ENCODE measurements at regions of chr2 and their contacts with region 1.

Region 1: GRCh38 chr2:137964066-137964858 is at the start of gene HNMT:
- DNase-seq: peak; percentile 80 to 84
- H3K4me3 ChIP-seq: peak within 1 kb of the TSS; percentile 50
- H3K4me3 Mint-ChIP-seq: peak within 1 kb of the TSS; percentile 93
- H3K27ac Mint-ChIP-seq: peak within 1 kb of the TSS; percentile 98
- H3K4me1 ChIP-seq: peaks cover 40% of the 10 kb centered on the region
- H3K4me1 Mint-ChIP-seq: peaks cover 24% of the 10 kb centered on the region
- H3K27me3 ChIP-seq: no peaks in the 10 kb centered on the region
- H3K27me3 Mint-ChIP-seq: no peaks in the 10 kb centered on the region
- CTCF ChIP-seq: no peak
- total RNA-seq, gene HNMT: 42.8 and 44.6 TPM in 2 replicates

Region 2: DNA sequence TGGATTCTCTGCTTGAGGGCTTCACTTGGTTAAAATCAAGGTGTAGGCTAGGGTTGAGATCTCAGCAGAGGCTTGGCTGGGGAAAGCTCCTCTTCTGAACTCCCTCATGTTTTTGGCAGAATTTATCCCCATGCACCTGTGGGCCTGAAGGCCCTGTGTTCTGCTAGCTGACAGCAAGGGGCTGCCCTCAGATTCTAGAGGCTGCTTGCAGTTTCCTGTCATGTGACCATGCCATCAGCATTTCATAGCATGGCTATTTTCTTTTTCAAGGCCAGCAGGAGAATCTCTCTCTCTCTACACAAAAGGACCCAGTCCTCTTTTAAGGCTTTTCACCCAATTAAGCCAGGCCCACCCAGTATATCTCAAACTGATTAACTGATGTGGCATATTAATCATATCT is 514.8 kb before region 1 on chr2:
- CTCF ChIA-PET with region 1: no interaction called
- POLR2A ChIA-PET with region 1: no interaction called
- intact Hi-C with region 1: no loop called
- DNase-seq: no peak
- H3K4me3 ChIP-seq: no peak overlapping the region
- H3K4me3 Mint-ChIP-seq: no peak overlapping the region
- H3K27ac Mint-ChIP-seq: no peak overlapping the region
- H3K4me1 ChIP-seq: no peaks in the 10 kb centered on the region
- H3K4me1 Mint-ChIP-seq: no peaks in the 10 kb centered on the region
- H3K27me3 ChIP-seq: no peaks in the 10 kb centered on the region
- H3K27me3 Mint-ChIP-seq: no peaks in the 10 kb centered on the region
- CTCF ChIP-seq: no peak

Region 3: GRCh38 chr2:137865954-137866540 is 98.2 kb before region 1 on chr2:
- CTCF ChIA-PET with region 1: interaction called, 5 read pairs
- POLR2A ChIA-PET with region 1: interaction called, 6 read pairs
- intact Hi-C with region 1: loop called (anchors 1 kb)
- DNase-seq: peak; percentile 73 to 79
- H3K4me3 ChIP-seq: no peak overlapping the region
- H3K4me3 Mint-ChIP-seq: no peak overlapping the region
- H3K27ac Mint-ChIP-seq: no peak overlapping the region
- H3K4me1 ChIP-seq: peaks cover 14% of the 10 kb centered on the region
- H3K4me1 Mint-ChIP-seq: no peaks in the 10 kb centered on the region
- H3K27me3 ChIP-seq: no peaks in the 10 kb centered on the region
- H3K27me3 Mint-ChIP-seq: no peaks in the 10 kb centered on the region
- CTCF ChIP-seq: peak; percentile 86 to 89

Region 4: DNA sequence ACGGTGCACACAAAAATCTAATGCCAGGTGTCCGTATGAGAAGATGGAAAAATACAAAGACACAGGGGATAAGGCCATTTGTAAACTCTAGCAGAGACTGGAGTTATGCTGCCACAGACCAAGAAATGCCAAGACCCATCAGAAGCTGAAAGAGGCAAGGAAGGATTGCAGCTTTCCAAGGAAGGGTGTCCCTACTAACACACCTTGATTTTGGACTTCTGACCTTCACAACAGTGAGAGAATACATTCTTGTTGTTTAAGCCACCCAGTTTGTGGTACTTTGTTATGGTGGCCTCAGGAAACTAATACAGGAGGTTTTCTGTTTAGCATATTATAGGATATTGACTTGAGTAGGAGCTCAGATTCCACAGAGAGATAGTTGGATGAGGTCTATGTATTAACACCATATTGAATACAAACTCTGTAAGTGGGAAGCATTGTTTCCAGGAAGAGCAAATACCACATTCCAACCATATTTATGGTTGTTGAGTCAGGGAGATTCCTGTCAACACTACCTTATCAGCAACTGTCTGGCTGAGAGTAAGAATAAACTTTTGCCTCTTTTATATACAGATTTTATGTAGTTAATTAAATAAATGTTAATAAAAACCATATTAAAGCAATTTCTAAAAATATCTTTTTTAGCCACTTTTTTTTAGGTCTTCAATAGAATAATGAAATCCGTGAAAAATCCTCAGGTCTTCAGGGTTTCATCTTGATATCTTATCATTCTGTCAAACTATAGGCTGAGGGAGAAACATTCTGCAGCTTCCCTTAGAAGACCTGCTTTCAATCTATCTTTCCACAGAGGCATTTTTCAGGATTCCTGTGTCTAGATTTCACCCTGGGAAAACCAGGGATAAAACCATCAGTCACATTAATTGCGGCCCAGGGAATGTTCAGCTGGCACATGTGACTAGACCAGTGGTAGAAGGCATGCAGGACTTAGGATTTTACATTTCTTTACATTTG is 35.4 kb before region 1 on chr2:
- CTCF ChIA-PET with region 1: no interaction called
- POLR2A ChIA-PET with region 1: interaction called, 11 read pairs
- intact Hi-C with region 1: loop called (anchors 1 kb)
- DNase-seq: peak; percentile 49 to 71
- H3K4me3 ChIP-seq: no peak overlapping the region
- H3K4me3 Mint-ChIP-seq: peak overlapping the region; percentile 37
- H3K27ac Mint-ChIP-seq: peak overlapping the region; percentile 91
- H3K4me1 ChIP-seq: peaks cover 21% of the 10 kb centered on the region
- H3K4me1 Mint-ChIP-seq: peaks cover 20% of the 10 kb centered on the region
- H3K27me3 ChIP-seq: no peaks in the 10 kb centered on the region
- H3K27me3 Mint-ChIP-seq: no peaks in the 10 kb centered on the region
- CTCF ChIP-seq: no peak

Region 5: DNA sequence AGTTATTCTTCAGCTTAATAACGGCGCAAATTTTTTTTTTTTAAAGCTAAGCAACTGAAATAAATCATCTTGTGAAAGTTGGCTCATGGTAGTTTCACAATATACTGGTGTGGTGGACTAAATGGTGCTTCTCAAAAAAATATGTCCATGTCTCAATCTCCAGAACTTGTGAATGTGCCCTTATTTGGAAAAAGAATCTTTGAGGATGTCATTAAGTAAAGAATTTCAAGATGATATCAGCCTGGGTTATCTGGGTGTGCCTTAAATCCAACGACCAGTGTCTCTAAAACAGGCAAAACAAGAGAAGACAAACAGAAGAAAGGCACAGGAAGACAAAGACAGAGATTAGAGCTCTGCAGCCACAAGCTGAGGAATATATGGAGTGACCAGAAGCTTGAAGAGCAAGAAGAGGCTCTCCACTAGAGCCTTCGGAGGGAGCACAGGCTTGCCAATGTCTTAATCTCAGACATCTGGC is 71.4 kb after region 1 on chr2:
- CTCF ChIA-PET with region 1: interaction called, 6 read pairs
- POLR2A ChIA-PET with region 1: interaction called, 13 read pairs
- intact Hi-C with region 1: loop called (anchors 1 kb)
- DNase-seq: peak; percentile 48 to 54
- H3K4me3 ChIP-seq: no peak overlapping the region
- H3K4me3 Mint-ChIP-seq: peak overlapping the region; percentile 12
- H3K27ac Mint-ChIP-seq: peak overlapping the region; percentile 79
- H3K4me1 ChIP-seq: peaks cover 42% of the 10 kb centered on the region
- H3K4me1 Mint-ChIP-seq: peaks cover 30% of the 10 kb centered on the region
- H3K27me3 ChIP-seq: no peaks in the 10 kb centered on the region
- H3K27me3 Mint-ChIP-seq: no peaks in the 10 kb centered on the region
- CTCF ChIP-seq: no peak

Region 6: GRCh38 chr2:138107292-138107691 is 143.0 kb after region 1 on chr2:
- CTCF ChIA-PET with region 1: no interaction called
- POLR2A ChIA-PET with region 1: interaction called, 3 read pairs
- intact Hi-C with region 1: loop called (anchors 1 kb)
- DNase-seq: no peak
- H3K4me3 ChIP-seq: no peak overlapping the region
- H3K4me3 Mint-ChIP-seq: no peak overlapping the region
- H3K27ac Mint-ChIP-seq: no peak overlapping the region
- H3K4me1 ChIP-seq: peaks cover 68% of the 10 kb centered on the region
- H3K4me1 Mint-ChIP-seq: peaks cover 42% of the 10 kb centered on the region
- H3K27me3 ChIP-seq: no peaks in the 10 kb centered on the region
- H3K27me3 Mint-ChIP-seq: no peaks in the 10 kb centered on the region
- CTCF ChIP-seq: no peak

Region 7: GRCh38 chr2:138727956-138728355 is 763.7 kb after region 1 on chr2:
- CTCF ChIA-PET with region 1: no interaction called
- POLR2A ChIA-PET with region 1: no interaction called
- intact Hi-C with region 1: loop called (anchors 5 kb)
- DNase-seq: no peak
- H3K4me3 ChIP-seq: no peak overlapping the region
- H3K4me3 Mint-ChIP-seq: no peak overlapping the region
- H3K27ac Mint-ChIP-seq: no peak overlapping the region
- H3K4me1 ChIP-seq: peaks cover 28% of the 10 kb centered on the region
- H3K4me1 Mint-ChIP-seq: peaks cover 7% of the 10 kb centered on the region
- H3K27me3 ChIP-seq: no peaks in the 10 kb centered on the region
- H3K27me3 Mint-ChIP-seq: no peaks in the 10 kb centered on the region
- CTCF ChIP-seq: no peak

Measured in Caco-2 (cell line).